ENCODE measurements at regions of chr10 and their contacts with region 1.

Region 1: GRCh38 chr10:11986593-11987216 is 55.9 kb downstream of the UPF2 start:
- DNase-seq: peak; percentile 86
- H3K4me3 ChIP-seq: no peak overlapping the region
- H3K27ac ChIP-seq: no peak overlapping the region
- H3K4me1 ChIP-seq: no peaks in the 10 kb centered on the region
- H3K27me3 ChIP-seq: no peaks in the 10 kb centered on the region
- CTCF ChIP-seq: peak; percentile 70 to 73
- POLR2A ChIP-seq: no peak

Region 2: DNA sequence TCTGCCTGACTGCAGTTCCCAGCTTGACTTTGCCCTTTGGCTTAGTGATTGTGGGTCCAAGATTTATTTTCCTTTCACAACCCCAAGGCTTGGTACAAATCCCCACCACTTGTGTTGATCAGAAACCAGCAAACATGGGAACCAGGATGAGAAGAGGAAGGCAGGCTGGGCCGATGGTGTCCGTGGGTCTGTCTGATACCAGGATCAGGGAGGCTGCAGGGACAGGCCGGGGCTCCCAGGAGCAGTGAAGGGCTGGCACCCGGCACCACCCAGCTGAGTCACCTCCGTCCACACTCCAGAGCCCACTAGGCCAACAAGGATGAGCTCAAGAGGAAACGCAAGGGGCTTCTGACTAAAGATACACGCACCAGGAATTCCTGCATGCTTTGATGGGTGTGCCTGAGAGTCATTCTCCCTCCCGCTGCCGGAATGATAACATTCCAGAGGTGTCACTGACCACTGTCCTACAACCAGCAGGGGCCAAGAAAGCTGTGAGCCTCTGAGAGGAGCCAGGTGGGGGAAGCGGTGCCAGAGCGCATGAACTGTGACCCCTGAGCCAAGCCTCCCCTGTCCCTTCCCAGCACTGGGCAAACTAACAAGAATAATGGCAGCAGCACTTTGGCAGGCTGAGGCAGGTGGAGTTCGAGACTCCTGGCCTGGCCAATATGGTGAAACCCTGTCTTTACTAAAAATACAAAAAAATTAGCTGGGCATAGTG is 192.8 kb before region 1 on chr10:
- CTCF ChIA-PET with region 1: interaction called, 62 read pairs
- POLR2A ChIA-PET with region 1: no interaction called
- dilution Hi-C with region 1: no loop called
- intact Hi-C with region 1: loop called (anchors 1 kb)
- DNase-seq: no peak
- H3K4me3 ChIP-seq: no peak overlapping the region
- H3K27ac ChIP-seq: no peak overlapping the region
- H3K4me1 ChIP-seq: peaks cover 15% of the 10 kb centered on the region
- H3K27me3 ChIP-seq: peaks cover 0 to 4% of the 10 kb centered on the region in 2 experiments
- CTCF ChIP-seq: no peak
- POLR2A ChIP-seq: no peak

Region 3: DNA sequence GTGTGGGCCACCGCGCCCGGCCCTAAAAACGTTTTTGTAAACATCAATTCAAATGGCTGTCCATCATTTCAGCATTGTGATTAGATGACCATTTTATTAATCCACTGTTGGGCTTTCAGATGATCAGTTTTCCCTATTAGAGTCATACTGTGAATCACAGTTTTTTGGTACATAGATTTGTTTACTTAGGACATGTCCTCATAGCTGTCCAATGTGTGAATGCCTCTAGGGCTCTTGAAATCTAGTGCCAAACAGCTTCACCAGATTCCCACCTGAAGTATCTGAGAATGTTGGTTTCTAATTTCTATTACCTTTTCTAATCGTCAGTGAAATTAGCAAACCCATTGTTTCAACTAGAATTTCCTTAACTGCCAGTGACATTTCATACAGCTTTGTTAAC is 10.9 kb before region 1 on chr10:
- CTCF ChIA-PET with region 1: interaction called, 20 read pairs
- POLR2A ChIA-PET with region 1: no interaction called
- dilution Hi-C with region 1: no loop called
- intact Hi-C with region 1: no loop called
- DNase-seq: no peak
- H3K4me3 ChIP-seq: no peak overlapping the region
- H3K27ac ChIP-seq: no peak overlapping the region
- H3K4me1 ChIP-seq: no peaks in the 10 kb centered on the region
- H3K27me3 ChIP-seq: no peaks in the 10 kb centered on the region
- CTCF ChIP-seq: no peak
- POLR2A ChIP-seq: no peak

Region 4: GRCh38 chr10:12013926-12014325 is 27.2 kb after region 1 on chr10:
- CTCF ChIA-PET with region 1: interaction called, 4 read pairs
- POLR2A ChIA-PET with region 1: no interaction called
- dilution Hi-C with region 1: no loop called
- intact Hi-C with region 1: loop called (anchors 1 kb)
- DNase-seq: no peak
- H3K4me3 ChIP-seq: no peak overlapping the region
- H3K27ac ChIP-seq: no peak overlapping the region
- H3K4me1 ChIP-seq: no peaks in the 10 kb centered on the region
- H3K27me3 ChIP-seq: no peaks in the 10 kb centered on the region
- CTCF ChIP-seq: no peak
- POLR2A ChIP-seq: no peak

Region 5: GRCh38 chr10:12068449-12069269 is 82.0 kb after region 1 on chr10 and contains the start of gene DHTKD1:
- CTCF ChIA-PET with region 1: interaction called, 3 read pairs
- POLR2A ChIA-PET with region 1: no interaction called
- dilution Hi-C with region 1: no loop called
- intact Hi-C with region 1: loop called (anchors 5 kb)
- DNase-seq: peak; percentile 99
- H3K4me3 ChIP-seq: peak within 1 kb of the TSS; percentile 82 to 92 (median 87)
- H3K27ac ChIP-seq: peak within 1 kb of the TSS; percentile 53
- H3K4me1 ChIP-seq: peaks cover 8% of the 10 kb centered on the region
- H3K27me3 ChIP-seq: peaks cover 0 to 6% of the 10 kb centered on the region in 2 experiments
- CTCF ChIP-seq: peak; percentile 7 to 44
- POLR2A ChIP-seq: peak; percentile 65
- total RNA-seq, gene DHTKD1: 15.3 and 17.6 TPM in 2 replicates